ENCODE measurements at regions of chr2 and their contacts with region 1.

Region 1: DNA sequence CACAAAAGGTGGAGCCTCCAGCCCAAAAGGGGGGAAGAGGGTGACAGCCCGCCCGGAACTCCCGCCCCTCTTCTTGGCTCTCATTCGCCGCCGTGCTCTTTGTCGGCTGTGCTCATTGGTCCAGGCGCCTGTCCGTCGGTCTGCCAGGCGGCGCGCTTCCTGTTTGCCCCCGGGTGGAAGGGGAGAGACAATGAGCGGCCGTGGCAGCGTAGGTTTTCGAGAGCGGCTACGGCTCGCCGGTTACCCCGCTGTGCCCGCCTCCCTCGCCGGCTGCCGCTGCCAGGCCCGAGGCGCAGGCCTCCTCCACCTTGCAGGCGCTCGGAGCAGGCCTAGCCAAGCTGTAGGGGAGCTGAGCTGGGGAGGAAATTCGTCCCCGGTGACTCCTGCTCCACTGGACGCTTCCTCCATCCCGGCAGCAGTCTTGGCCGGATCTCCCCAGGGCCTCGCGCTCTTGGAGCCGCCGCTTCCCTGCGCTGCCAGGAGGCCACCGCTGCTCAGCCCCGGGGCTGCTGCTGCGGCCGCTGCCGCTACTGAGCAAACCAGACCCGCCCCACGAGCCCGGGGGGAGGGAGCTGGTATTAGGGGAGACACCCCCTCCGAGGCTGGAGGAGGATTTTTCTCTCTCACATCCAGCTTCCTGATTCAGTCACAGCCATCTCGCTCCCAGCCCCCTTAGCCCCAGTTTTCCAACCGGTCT is at the start of gene SP3:
- DNase-seq: peak; percentile 91
- ATAC-seq: peak; percentile 66
- H3K4me3 Mint-ChIP-seq: peak within 1 kb of the TSS; percentile 93
- H3K27ac Mint-ChIP-seq: peak within 1 kb of the TSS; percentile 98
- H3K4me1 Mint-ChIP-seq: peaks cover 45% of the 10 kb centered on the region
- H3K27me3 Mint-ChIP-seq: no peaks in the 10 kb centered on the region
- CTCF ChIP-seq: no peak
- total RNA-seq, gene SP3: 124 and 139 TPM in 2 replicates

Region 2: GRCh38 chr2:173898178-173898668 is 67.3 kb before region 1 on chr2:
- CTCF ChIA-PET with region 1: no interaction called
- POLR2A ChIA-PET with region 1: interaction called, 8 read pairs
- intact Hi-C with region 1: loop called (anchors 1 kb)
- DNase-seq: no peak
- ATAC-seq: peak; percentile 90
- H3K4me3 Mint-ChIP-seq: peak overlapping the region; percentile 52
- H3K27ac Mint-ChIP-seq: peak overlapping the region; percentile 51
- H3K4me1 Mint-ChIP-seq: peaks cover 41% of the 10 kb centered on the region
- H3K27me3 Mint-ChIP-seq: no peaks in the 10 kb centered on the region
- CTCF ChIP-seq: no peak

Region 3: GRCh38 chr2:173940208-173941020 is 25.1 kb before region 1 on chr2:
- CTCF ChIA-PET with region 1: no interaction called
- POLR2A ChIA-PET with region 1: interaction called, 4 read pairs
- intact Hi-C with region 1: loop called (anchors 2 kb)
- DNase-seq: no peak
- ATAC-seq: peak; percentile 26
- H3K4me3 Mint-ChIP-seq: peak overlapping the region; percentile 35
- H3K27ac Mint-ChIP-seq: peak overlapping the region; percentile 71
- H3K4me1 Mint-ChIP-seq: peaks cover 70% of the 10 kb centered on the region
- H3K27me3 Mint-ChIP-seq: no peaks in the 10 kb centered on the region
- CTCF ChIP-seq: no peak

Region 4: GRCh38 chr2:173997269-173997668 is 31.8 kb after region 1 on chr2:
- CTCF ChIA-PET with region 1: no interaction called
- POLR2A ChIA-PET with region 1: interaction called, 105 read pairs
- intact Hi-C with region 1: loop called (anchors 1 kb)
- DNase-seq: peak; percentile 45
- ATAC-seq: peak; percentile 100
- H3K4me3 Mint-ChIP-seq: peak overlapping the region; percentile 13
- H3K27ac Mint-ChIP-seq: peak overlapping the region; percentile 72
- H3K4me1 Mint-ChIP-seq: peaks cover 33% of the 10 kb centered on the region
- H3K27me3 Mint-ChIP-seq: no peaks in the 10 kb centered on the region
- CTCF ChIP-seq: no peak

Region 5: DNA sequence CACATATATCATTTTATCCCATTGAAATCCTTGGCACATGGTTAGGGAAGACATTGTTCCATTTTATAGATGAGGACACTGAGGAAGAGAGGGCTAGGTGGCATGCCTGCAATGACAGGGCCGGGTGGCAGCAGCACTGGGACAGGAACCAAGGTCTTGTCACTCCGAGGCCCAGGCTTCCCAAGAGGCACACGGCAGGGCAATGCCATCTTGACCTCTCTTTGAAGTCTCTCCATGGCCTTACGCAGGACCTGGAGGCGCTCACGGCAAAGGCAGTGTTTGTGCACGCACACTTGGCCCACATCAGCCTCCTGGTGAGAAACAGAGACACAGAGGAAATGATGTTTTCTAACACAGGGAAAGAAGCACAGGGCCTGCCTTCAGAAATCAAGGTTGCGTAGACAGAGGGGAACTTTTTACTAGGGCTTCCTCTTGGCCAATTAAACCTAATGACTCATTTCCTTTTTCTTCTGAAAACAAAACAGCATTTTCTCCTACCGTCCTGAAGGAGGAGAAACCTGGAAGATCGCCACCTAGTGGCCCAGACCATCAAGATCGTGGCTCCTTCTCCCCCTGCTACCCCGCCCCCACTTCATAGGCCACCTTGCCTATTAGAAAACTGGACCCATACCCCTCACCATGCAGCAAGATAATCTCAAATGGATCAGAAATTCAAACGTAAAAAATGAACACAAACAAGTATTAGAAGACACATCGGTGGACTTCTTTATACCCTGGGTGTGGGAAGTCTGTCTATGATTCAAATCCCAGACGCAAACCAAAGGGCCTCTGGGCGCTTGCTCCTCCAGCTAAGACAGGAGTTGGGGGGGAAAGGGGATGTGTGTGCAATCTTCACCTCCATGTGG is 74.3 kb after region 1 on chr2:
- CTCF ChIA-PET with region 1: no interaction called
- POLR2A ChIA-PET with region 1: interaction called, 41 read pairs
- intact Hi-C with region 1: loop called (anchors 1 kb)
- DNase-seq: peak; percentile 69
- ATAC-seq: peak; percentile 93
- H3K4me3 Mint-ChIP-seq: peak overlapping the region; percentile 50
- H3K27ac Mint-ChIP-seq: peak overlapping the region; percentile 92
- H3K4me1 Mint-ChIP-seq: peaks cover 28% of the 10 kb centered on the region
- H3K27me3 Mint-ChIP-seq: no peaks in the 10 kb centered on the region
- CTCF ChIP-seq: no peak

Region 6: GRCh38 chr2:174145827-174146226 is 180.3 kb after region 1 on chr2:
- CTCF ChIA-PET with region 1: no interaction called
- POLR2A ChIA-PET with region 1: no interaction called
- intact Hi-C with region 1: no loop called
- DNase-seq: no peak
- ATAC-seq: no peak
- H3K4me3 Mint-ChIP-seq: no peak overlapping the region
- H3K27ac Mint-ChIP-seq: no peak overlapping the region
- H3K4me1 Mint-ChIP-seq: no peaks in the 10 kb centered on the region
- H3K27me3 Mint-ChIP-seq: no peaks in the 10 kb centered on the region
- CTCF ChIP-seq: no peak

Region 7: DNA sequence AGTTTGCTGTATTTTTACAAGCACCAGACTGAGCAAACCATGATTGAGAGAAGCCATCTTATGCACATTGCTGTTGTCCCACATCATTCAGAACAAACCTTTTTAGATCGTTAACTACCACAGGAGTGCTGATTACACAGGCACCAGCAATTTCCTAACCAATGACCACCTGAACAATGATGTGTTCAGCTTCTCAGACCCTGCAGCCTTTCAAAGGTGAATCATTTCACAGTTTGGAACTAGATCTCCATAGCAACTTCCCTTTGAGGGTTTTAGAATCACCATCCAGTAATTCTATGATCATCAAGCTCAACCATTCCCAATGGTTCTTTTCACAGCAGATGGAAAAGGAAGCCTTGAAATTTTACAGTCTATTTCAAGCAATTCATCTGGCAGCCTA is 211.4 kb after region 1 on chr2:
- CTCF ChIA-PET with region 1: no interaction called
- POLR2A ChIA-PET with region 1: no interaction called
- intact Hi-C with region 1: no loop called
- DNase-seq: no peak
- ATAC-seq: no peak
- H3K4me3 Mint-ChIP-seq: no peak overlapping the region
- H3K27ac Mint-ChIP-seq: no peak overlapping the region
- H3K4me1 Mint-ChIP-seq: peaks cover 4% of the 10 kb centered on the region
- H3K27me3 Mint-ChIP-seq: no peaks in the 10 kb centered on the region
- CTCF ChIP-seq: no peak

Region 8: GRCh38 chr2:174395284-174395968 is 429.9 kb after region 1 on chr2 and contains the start of gene SCRN3:
- CTCF ChIA-PET with region 1: no interaction called
- POLR2A ChIA-PET with region 1: no interaction called
- intact Hi-C with region 1: loop called (anchors 2 kb)
- DNase-seq: peak; percentile 59
- ATAC-seq: peak; percentile 94
- H3K4me3 Mint-ChIP-seq: peak within 1 kb of the TSS; percentile 100
- H3K27ac Mint-ChIP-seq: peak within 1 kb of the TSS; percentile 98
- H3K4me1 Mint-ChIP-seq: peaks cover 34% of the 10 kb centered on the region
- H3K27me3 Mint-ChIP-seq: no peaks in the 10 kb centered on the region
- CTCF ChIP-seq: no peak
- total RNA-seq, gene SCRN3: 14.3 and 19.4 TPM in 2 replicates

Region 9: GRCh38 chr2:174593574-174594203 is 628.2 kb after region 1 on chr2:
- CTCF ChIA-PET with region 1: no interaction called
- POLR2A ChIA-PET with region 1: interaction called, 17 read pairs
- intact Hi-C with region 1: loop called (anchors 5 kb)
- DNase-seq: no peak
- ATAC-seq: peak; percentile 65
- H3K4me3 Mint-ChIP-seq: peak overlapping the region; percentile 98
- H3K27ac Mint-ChIP-seq: peak overlapping the region; percentile 99
- H3K4me1 Mint-ChIP-seq: peaks cover 78% of the 10 kb centered on the region
- H3K27me3 Mint-ChIP-seq: no peaks in the 10 kb centered on the region
- CTCF ChIP-seq: no peak

Measured in activated B cell treated with CpG ODN at 0.5 μM for 24 hours (primary cell).